Calu3 (cell line): ENCODE measurements at regions of chr13 and their contacts with region 1.

Region 1: DNA sequence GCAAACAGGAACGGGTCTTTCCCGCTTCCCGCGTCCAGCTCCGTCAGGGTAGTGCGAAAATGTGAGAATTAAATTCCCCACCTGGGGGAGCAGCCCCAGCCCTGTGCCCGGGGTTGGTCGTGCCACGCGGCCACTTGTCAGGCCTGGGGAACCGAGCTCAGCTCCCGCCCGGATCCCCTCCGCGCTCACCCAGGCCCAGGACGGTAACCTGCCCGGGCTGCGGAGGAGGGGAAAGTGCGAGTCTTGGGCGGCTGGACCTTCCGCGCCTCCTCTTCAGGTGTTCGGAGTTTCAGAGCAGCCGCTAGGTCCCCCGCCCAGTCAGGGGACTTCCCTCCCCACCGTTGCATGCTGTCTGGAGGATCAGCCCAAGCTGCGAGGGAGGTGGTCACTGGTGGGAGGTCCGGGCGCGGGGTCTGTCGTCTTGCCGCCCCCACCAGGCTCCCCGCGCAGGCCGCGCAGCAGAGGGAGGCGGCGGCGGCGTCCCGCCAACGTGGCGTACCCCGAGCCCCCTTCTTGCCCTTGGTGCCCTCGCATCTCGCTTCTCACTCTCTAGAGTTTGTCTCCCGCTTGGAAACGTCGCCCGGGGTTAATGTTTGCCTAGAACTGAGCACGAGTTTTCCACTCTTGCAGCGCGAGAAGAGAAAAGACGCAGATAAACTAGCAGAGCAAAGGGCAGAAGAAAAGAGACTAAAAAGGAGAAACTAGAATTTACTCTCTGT is 8.1 kb downstream of the URAD start:
- DNase-seq: no peak
- H3K4me3 Mint-ChIP-seq: peak overlapping the region; percentile 19
- H3K27ac Mint-ChIP-seq: no peak overlapping the region
- H3K4me1 Mint-ChIP-seq: peaks cover 16% of the 10 kb centered on the region
- H3K27me3 Mint-ChIP-seq: peaks cover 69% of the 10 kb centered on the region
- CTCF ChIP-seq: no peak

Region 2: DNA sequence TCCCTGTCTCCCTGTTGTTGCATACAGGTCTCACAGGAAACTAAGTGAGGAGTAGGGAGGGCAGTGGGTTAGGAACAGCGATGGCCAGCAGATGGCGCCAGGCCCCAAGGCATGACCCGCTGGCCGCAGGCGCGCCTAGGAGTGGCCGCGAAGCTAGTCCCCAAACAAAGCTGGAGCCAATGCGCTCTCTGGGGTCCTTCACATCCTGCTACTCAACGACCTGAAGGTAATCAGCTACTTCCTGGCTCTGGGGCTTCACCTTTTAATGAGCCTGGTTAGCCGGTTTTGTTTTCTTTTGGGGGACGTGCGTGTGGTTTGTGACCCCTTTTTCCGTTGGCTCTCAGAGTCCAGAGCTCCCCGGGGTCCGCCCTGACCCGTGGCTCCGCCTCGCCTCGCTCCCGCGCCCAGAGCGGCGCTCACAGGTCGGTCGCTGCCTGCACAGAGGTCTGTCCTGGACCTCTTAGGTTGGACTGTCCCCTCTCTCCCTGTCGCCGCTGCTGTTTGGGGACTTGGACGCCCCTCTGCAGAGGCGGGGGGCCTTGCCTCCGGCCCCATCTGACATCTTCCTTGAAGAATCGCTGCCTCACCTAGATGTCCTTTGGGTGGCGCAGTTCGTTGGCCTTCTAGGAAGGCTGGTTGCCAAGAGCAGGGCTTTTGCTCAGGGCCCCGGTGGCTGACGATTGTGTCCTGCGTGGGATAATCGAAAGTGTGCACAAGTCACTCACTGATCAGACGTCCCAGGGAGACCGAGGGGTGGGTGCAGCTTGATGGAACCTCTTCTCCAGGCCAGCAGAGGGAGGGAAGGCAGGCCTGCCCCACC is 618.2 kb before region 1 on chr13:
- CTCF ChIA-PET with region 1: interaction called, 15 read pairs
- intact Hi-C with region 1: no loop called
- DNase-seq: peak; percentile 82
- H3K4me3 Mint-ChIP-seq: peak overlapping the region; percentile 41
- H3K27ac Mint-ChIP-seq: no peak overlapping the region
- H3K4me1 Mint-ChIP-seq: no peaks in the 10 kb centered on the region
- H3K27me3 Mint-ChIP-seq: peaks cover 27% of the 10 kb centered on the region
- CTCF ChIP-seq: peak; percentile 80

Region 3: DNA sequence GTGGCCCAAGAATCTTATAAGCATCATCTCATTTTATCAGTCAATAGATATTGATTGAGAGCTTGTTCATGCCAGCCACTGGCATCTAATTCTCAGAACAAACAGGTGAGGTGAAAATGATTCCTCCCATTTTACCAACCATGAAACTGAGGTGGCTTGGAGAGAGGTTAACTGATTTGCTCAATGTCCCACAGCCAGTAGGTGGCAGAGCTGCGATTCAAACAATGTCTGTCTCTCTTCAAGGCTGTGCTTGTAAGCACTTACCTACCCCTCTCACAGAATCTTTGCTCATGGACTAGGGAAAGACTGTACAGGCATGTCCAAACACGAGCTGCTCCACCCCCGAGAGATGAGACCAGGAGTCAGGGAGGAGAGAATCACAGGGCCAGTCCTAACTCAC is 209.6 kb before region 1 on chr13:
- CTCF ChIA-PET with region 1: interaction called, 3 read pairs
- intact Hi-C with region 1: loop called (anchors 5 kb)
- DNase-seq: peak; percentile 30
- H3K4me3 Mint-ChIP-seq: no peak overlapping the region
- H3K27ac Mint-ChIP-seq: no peak overlapping the region
- H3K4me1 Mint-ChIP-seq: no peaks in the 10 kb centered on the region
- H3K27me3 Mint-ChIP-seq: peaks cover 65% of the 10 kb centered on the region
- CTCF ChIP-seq: peak; percentile 20